Endothelial cell of umbilical vein (primary cell): ENCODE measurements at regions of chr1 and their contacts with region 1.

Region 1: DNA sequence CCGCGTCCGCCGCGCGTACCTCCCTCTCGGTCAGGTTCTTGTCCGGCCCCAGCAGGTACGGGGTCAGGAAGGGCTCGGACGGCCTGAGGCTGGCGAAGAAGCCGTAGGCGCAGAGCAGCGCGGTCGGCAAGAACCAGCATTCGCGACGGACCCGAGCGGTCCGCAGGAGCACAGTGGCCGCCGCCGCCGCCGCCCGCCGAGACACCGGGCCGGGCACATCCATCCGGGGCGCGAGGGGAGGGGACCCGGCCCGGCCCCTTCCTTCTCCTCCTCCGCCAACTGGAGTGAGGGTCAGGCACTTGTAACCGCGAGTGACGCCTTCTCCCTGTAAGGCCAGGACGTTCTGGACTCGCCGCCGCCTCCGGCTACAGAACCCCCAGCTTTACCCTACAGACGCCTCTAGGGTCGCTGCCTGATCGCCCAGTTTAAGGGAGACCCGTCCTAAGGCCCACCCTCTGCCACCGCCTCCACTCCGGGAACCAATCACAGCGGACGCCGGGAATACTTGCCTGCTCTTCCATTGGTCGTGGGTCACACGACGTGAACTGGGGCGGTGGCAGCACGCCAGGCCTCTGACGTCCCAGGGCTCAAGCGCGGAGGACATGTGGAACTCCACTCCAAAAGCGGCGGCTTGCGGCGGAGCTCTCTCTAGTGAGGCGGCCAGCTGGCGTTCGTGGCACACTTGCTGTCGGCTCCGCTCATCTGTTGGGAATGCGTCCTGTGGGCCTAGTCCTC is at the start of gene SLC19A2:
- DNase-seq: peak; percentile 99
- H3K4me3 ChIP-seq: peak within 1 kb of the TSS; percentile 37 to 80 (median 78)
- H3K27ac ChIP-seq: peak within 1 kb of the TSS; percentile 96
- H3K4me1 ChIP-seq: peaks cover 31% of the 10 kb centered on the region
- H3K27me3 ChIP-seq: no peaks in the 10 kb centered on the region
- CTCF ChIP-seq: peak in 1 of 2 donors; percentile 31
- POLR2A ChIP-seq: peak; percentile 87
- total RNA-seq, gene SLC19A2: 5.4 and 7.0 TPM in 2 replicates

Region 2: GRCh38 chr1:168920456-168921094 is 565.1 kb before region 1 on chr1:
- CTCF ChIA-PET with region 1: no interaction called
- POLR2A ChIA-PET with region 1: no interaction called
- dilution Hi-C with region 1: no loop called
- intact Hi-C with region 1: loop called (anchors 2 kb)
- DNase-seq: peak; percentile 90
- H3K4me3 ChIP-seq: peak overlapping the region in 1 of 3 experiments; percentile 21
- H3K27ac ChIP-seq: peak overlapping the region; percentile 84
- H3K4me1 ChIP-seq: peaks cover 59% of the 10 kb centered on the region
- H3K27me3 ChIP-seq: no peaks in the 10 kb centered on the region
- CTCF ChIP-seq: no peak
- POLR2A ChIP-seq: no peak

Region 3: GRCh38 chr1:169367486-169368405 is 118.0 kb before region 1 on chr1 and contains the starts of genes BLZF1 and NME7:
- CTCF ChIA-PET with region 1: interaction called, 3 read pairs
- POLR2A ChIA-PET with region 1: no interaction called
- dilution Hi-C with region 1: no loop called
- intact Hi-C with region 1: loop called (anchors 2 kb)
- DNase-seq: peak; percentile 98
- H3K4me3 ChIP-seq: peak within 1 kb of the TSS; percentile 97 to 100 (median 98)
- H3K27ac ChIP-seq: peak within 1 kb of the TSS; percentile 96
- H3K4me1 ChIP-seq: peaks cover 19% of the 10 kb centered on the region
- H3K27me3 ChIP-seq: no peaks in the 10 kb centered on the region
- CTCF ChIP-seq: no peak
- POLR2A ChIP-seq: peak; percentile 84
- total RNA-seq, gene BLZF1: 19.7 and 21.2 TPM in 2 replicates
- total RNA-seq, gene NME7: 25.0 and 25.3 TPM in 2 replicates

Region 4: DNA sequence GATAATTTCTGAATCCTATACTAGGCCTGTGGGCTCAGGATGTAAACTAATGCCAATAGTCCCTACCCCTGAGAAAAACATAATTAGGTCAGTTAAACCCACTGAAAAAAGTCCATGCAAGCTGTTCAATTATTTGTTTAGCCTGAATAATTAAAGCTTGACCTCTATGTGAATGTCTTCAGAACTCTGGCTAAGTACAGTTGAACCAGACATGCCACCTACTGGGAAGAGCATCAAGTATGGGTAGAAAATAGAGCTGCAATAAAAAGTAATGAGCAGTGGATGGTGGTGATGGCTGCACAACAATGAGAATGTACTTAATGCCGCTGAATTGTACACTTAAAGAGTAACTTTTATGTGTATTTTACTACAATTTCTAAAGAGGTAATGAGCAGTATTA is 23.6 kb after region 1 on chr1:
- CTCF ChIA-PET with region 1: interaction called, 8 read pairs
- POLR2A ChIA-PET with region 1: interaction called, 6 read pairs
- dilution Hi-C with region 1: no loop called
- intact Hi-C with region 1: loop called (anchors 1 kb)
- DNase-seq: peak; percentile 35
- H3K4me3 ChIP-seq: no peak overlapping the region
- H3K27ac ChIP-seq: no peak overlapping the region
- H3K4me1 ChIP-seq: peaks cover 35% of the 10 kb centered on the region
- H3K27me3 ChIP-seq: no peaks in the 10 kb centered on the region
- CTCF ChIP-seq: no peak
- POLR2A ChIP-seq: no peak

Region 5: DNA sequence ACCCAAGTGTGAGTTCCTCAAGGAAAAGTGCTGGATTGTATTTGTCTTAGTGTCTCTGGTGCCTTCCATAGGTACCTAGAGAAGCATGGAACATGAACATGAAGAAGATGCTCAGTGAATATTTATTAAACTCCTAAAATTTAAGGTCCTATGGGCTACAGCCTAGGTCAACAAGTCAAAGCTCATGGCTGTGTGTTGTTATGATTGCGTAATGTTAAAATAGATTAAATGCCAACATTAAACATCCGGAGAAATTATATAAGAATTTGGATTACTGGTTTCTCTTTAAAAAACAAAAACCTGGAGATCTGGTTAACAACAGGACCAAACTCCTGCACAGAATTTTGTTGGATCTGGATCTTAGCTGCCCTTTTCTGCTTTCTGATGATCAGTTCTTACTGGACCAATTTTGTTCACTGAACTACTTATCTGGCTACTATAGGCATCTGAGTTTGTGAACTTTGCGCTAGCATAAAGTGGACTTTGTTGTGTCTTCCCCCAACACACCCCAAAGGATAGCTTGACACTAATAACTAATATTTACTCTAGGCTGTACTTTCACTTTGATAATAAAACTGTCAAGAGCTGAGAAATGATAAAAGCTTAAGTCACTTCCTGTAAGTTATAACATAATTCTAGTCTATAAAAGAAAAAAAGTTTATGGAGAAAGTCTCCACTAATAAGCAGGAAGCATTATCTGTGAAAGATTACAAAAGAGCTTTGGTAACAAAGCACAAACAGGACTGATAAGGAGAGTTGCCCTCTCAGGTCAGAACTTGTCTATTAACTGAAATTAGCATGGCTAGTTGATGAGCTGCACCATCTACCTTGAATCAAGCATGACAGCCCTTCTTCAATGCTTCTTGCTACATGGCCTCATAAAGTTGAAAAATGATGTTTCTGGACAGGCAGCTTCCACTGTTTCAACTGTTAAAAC is 79.9 kb after region 1 on chr1:
- CTCF ChIA-PET with region 1: no interaction called
- POLR2A ChIA-PET with region 1: no interaction called
- dilution Hi-C with region 1: no loop called
- intact Hi-C with region 1: no loop called
- DNase-seq: peak; percentile 67
- H3K4me3 ChIP-seq: no peak overlapping the region
- H3K27ac ChIP-seq: no peak overlapping the region
- H3K4me1 ChIP-seq: peaks cover 8% of the 10 kb centered on the region
- H3K27me3 ChIP-seq: no peaks in the 10 kb centered on the region
- CTCF ChIP-seq: no peak
- POLR2A ChIP-seq: no peak

Region 6: GRCh38 chr1:169586395-169587255 is 100.9 kb after region 1 on chr1 and contains the start of gene F5:
- CTCF ChIA-PET with region 1: no interaction called
- POLR2A ChIA-PET with region 1: no interaction called
- dilution Hi-C with region 1: no loop called
- intact Hi-C with region 1: no loop called
- DNase-seq: peak; percentile 61
- H3K4me3 ChIP-seq: no peak within 1 kb of the TSS
- H3K27ac ChIP-seq: no peak within 1 kb of the TSS
- H3K4me1 ChIP-seq: no peaks in the 10 kb centered on the region
- H3K27me3 ChIP-seq: peaks cover 0 to 4% of the 10 kb centered on the region in 2 experiments
- CTCF ChIP-seq: peak; percentile 43 to 79
- POLR2A ChIP-seq: no peak
- total RNA-seq, gene F5: not detected in 2 replicates

Region 7: GRCh38 chr1:169724168-169724567 is 238.5 kb after region 1 on chr1:
- CTCF ChIA-PET with region 1: no interaction called
- POLR2A ChIA-PET with region 1: no interaction called
- dilution Hi-C with region 1: no loop called
- intact Hi-C with region 1: no loop called
- DNase-seq: no peak
- H3K4me3 ChIP-seq: no peak overlapping the region
- H3K27ac ChIP-seq: no peak overlapping the region
- H3K4me1 ChIP-seq: no peaks in the 10 kb centered on the region
- H3K27me3 ChIP-seq: peaks cover under 1 to 11% of the 10 kb centered on the region in 2 experiments
- CTCF ChIP-seq: no peak
- POLR2A ChIP-seq: no peak